ENCODE measurements at regions of chr19 and their contacts with region 1.

Region 1: GRCh38 chr19:10194500-10195289 is at the start of gene DNMT1:
- DNase-seq: peak; percentile 97
- ATAC-seq: peak; percentile 94
- H3K4me3 ChIP-seq: peak within 1 kb of the TSS; percentile 68 to 89 (median 84)
- H3K4me3 Mint-ChIP-seq: peak within 1 kb of the TSS; percentile 97
- H3K27ac ChIP-seq: peak within 1 kb of the TSS; percentile 57 to 78
- H3K27ac Mint-ChIP-seq: peak within 1 kb of the TSS; percentile 94
- H3K4me1 ChIP-seq: peaks cover 14 to 23% of the 10 kb centered on the region in 2 donors
- H3K4me1 Mint-ChIP-seq: peaks cover 35% of the 10 kb centered on the region
- H3K27me3 ChIP-seq: no peaks in the 10 kb centered on the region
- H3K27me3 Mint-ChIP-seq: no peaks in the 10 kb centered on the region
- CTCF ChIP-seq: no peak
- total RNA-seq, gene DNMT1: 108 and 119 TPM in 2 replicates

Region 2: GRCh38 chr19:9934132-9934950 is 260.4 kb before region 1 on chr19:
- CTCF ChIA-PET with region 1: interaction called, 3 read pairs
- POLR2A ChIA-PET with region 1: no interaction called
- intact Hi-C with region 1: loop called (anchors 10 kb)
- DNase-seq: peak; percentile 84
- ATAC-seq: peak; percentile 82
- H3K4me3 ChIP-seq: no peak overlapping the region
- H3K4me3 Mint-ChIP-seq: no peak overlapping the region
- H3K27ac ChIP-seq: no peak overlapping the region
- H3K27ac Mint-ChIP-seq: no peak overlapping the region
- H3K4me1 ChIP-seq: peaks cover 22 to 30% of the 10 kb centered on the region in 2 donors
- H3K4me1 Mint-ChIP-seq: peaks cover 26% of the 10 kb centered on the region
- H3K27me3 ChIP-seq: peaks cover 0 to 60% (median 34%) of the 10 kb centered on the region in 4 experiments
- H3K27me3 Mint-ChIP-seq: peaks cover 51% of the 10 kb centered on the region
- CTCF ChIP-seq: peak; percentile 89

Region 3: DNA sequence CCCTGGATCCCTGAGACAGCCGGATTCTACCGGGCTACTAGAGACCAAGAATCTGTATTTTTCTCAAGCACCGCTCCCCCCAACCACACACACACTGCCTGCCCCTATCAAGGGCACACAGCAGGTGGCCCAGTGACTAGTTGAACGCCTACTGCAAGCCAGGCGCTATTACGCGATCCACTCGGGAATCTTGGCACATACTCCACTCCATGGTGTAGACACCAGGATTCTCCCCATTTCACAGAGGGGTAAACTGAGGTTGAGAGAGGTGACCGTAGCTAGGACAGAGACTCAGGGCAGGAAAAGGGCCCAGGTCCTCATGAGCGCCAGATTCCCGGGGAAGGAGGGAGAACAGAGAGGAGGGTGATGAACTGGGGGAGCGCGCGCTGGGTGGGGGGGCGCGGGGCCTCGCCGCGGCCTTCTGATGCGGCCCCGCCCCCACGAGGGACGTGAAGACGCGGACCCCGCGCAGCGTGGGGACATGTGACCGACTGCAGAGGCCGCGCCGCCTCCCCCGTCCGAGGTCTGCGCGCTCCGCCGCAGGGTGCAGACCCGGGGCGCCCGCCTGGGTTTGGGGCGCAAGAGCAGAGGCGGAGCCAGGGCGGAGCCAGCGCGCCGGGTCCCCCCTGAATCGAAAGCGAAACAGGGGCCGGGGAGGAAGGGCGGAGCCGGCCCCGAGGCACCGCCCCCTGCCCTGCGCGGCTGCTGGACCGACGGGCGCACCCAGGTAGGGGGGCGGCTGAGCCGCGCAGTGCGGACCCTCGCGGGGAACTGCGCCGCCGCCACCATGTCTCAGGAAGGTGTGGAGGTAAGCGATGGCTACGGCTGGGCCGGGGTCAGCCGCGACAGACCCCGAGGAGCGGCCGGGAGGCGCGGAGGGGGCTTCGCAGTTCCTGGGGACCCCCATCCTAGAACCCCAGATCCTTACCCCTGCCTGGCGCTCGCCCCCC is 108.8 kb before region 1 on chr19 and contains the start of gene SHFL:
- CTCF ChIA-PET with region 1: no interaction called
- POLR2A ChIA-PET with region 1: no interaction called
- intact Hi-C with region 1: loop called (anchors 10 kb)
- DNase-seq: peak; percentile 91
- ATAC-seq: peak; percentile 97
- H3K4me3 ChIP-seq: peak within 1 kb of the TSS; percentile 50 to 99 (median 96)
- H3K4me3 Mint-ChIP-seq: peak within 1 kb of the TSS; percentile 89
- H3K27ac ChIP-seq: peak within 1 kb of the TSS; percentile 70 to 80
- H3K27ac Mint-ChIP-seq: peak within 1 kb of the TSS; percentile 82
- H3K4me1 ChIP-seq: peaks cover 6 to 16% of the 10 kb centered on the region in 2 donors
- H3K4me1 Mint-ChIP-seq: peaks cover 16% of the 10 kb centered on the region
- H3K27me3 ChIP-seq: no peaks in the 10 kb centered on the region
- H3K27me3 Mint-ChIP-seq: no peaks in the 10 kb centered on the region
- CTCF ChIP-seq: no peak
- total RNA-seq, gene SHFL: 95.8 and 109 TPM in 2 replicates

Region 4: GRCh38 chr19:10120538-10121189 is 74.0 kb before region 1 on chr19:
- CTCF ChIA-PET with region 1: interaction called, 3 read pairs
- POLR2A ChIA-PET with region 1: interaction called, 5 read pairs
- intact Hi-C with region 1: loop called (anchors 2 kb)
- DNase-seq: no peak
- ATAC-seq: no peak
- H3K4me3 ChIP-seq: no peak overlapping the region
- H3K4me3 Mint-ChIP-seq: peak overlapping the region; percentile 37
- H3K27ac ChIP-seq: no peak overlapping the region
- H3K27ac Mint-ChIP-seq: no peak overlapping the region
- H3K4me1 ChIP-seq: peaks cover 9 to 19% of the 10 kb centered on the region in 2 donors
- H3K4me1 Mint-ChIP-seq: peaks cover 31% of the 10 kb centered on the region
- H3K27me3 ChIP-seq: no peaks in the 10 kb centered on the region
- H3K27me3 Mint-ChIP-seq: no peaks in the 10 kb centered on the region
- CTCF ChIP-seq: no peak

Region 5: DNA sequence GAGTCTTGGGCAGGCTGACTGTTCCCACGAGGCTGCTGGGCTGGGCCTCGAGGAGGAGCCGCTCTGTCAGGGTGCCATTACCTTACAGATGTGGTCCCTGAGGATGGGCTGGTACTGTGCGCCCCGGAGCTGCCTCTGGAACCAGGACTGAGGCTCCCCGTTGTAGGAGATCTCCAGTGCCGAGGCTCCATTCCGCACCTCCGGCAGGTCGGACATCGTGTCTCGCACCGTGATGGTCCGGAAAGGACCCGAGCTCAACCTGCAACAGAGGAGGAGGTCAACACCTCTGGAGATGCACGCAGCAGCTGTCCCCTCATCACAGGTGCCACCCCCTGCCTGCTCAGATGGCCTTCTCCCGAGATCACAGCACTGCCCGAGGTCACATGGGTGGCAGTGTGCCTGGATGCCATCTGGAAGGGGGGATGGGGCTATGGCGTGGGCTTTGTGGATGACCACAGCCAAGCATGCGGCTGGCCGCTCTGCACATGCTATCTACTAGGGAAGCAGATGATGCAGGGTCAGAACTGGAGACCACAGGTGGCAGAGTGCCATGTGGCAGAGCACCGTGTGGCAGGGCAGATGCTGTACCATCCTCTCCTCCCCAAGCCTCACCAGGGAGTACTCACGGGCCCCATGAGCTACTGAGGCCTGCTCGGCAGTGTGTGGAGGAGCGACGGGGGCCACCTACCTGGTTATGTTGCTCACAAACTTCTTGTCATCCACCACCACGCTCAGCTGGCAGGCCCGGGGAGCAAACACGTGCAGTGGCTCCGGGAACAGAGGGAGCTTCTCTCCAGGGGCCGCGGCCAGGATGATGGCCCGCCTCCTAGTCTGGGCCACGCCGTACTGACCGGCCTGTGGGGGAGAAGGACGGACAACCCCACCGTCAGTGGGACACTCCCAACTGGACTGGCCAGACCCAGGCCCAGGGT is 56.7 kb before region 1 on chr19:
- CTCF ChIA-PET with region 1: no interaction called
- POLR2A ChIA-PET with region 1: no interaction called
- intact Hi-C with region 1: no loop called
- DNase-seq: no peak
- ATAC-seq: no peak
- H3K4me3 ChIP-seq: no peak overlapping the region
- H3K4me3 Mint-ChIP-seq: no peak overlapping the region
- H3K27ac ChIP-seq: no peak overlapping the region
- H3K27ac Mint-ChIP-seq: no peak overlapping the region
- H3K4me1 ChIP-seq: no peaks in the 10 kb centered on the region
- H3K4me1 Mint-ChIP-seq: no peaks in the 10 kb centered on the region
- H3K27me3 ChIP-seq: no peaks in the 10 kb centered on the region
- H3K27me3 Mint-ChIP-seq: no peaks in the 10 kb centered on the region
- CTCF ChIP-seq: no peak

Region 6: GRCh38 chr19:10230861-10231611 is 36.3 kb after region 1 on chr19 and contains the start of gene S1PR2:
- CTCF ChIA-PET with region 1: interaction called, 4 read pairs
- POLR2A ChIA-PET with region 1: interaction called, 6 read pairs
- intact Hi-C with region 1: loop called (anchors 1 kb)
- DNase-seq: peak; percentile 93
- ATAC-seq: peak; percentile 29
- H3K4me3 ChIP-seq: peak within 1 kb of the TSS; percentile 11 to 97 (median 66)
- H3K4me3 Mint-ChIP-seq: peak within 1 kb of the TSS; percentile 83
- H3K27ac ChIP-seq: peak within 1 kb of the TSS in 1 of 2 donors; percentile 81
- H3K27ac Mint-ChIP-seq: peak within 1 kb of the TSS; percentile 73
- H3K4me1 ChIP-seq: peaks cover 28 to 57% of the 10 kb centered on the region in 2 donors
- H3K4me1 Mint-ChIP-seq: peaks cover 45% of the 10 kb centered on the region
- H3K27me3 ChIP-seq: no peaks in the 10 kb centered on the region
- H3K27me3 Mint-ChIP-seq: no peaks in the 10 kb centered on the region
- CTCF ChIP-seq: no peak
- total RNA-seq, gene S1PR2: 3.6 and 4.4 TPM in 2 replicates

Measured in B cell (primary cell).